T-cell (primary cell): ENCODE measurements at regions of chr19 and their contacts with region 1.

Region 1: GRCh38 chr19:13181747-13182388 is 31.7 kb downstream of the IER2 start:
- DNase-seq: peak in 27 of 35 experiments; percentile 15 to 58 (median 36)
- ATAC-seq: peak; percentile 40 to 75 (median 71)
- H3K4me3 ChIP-seq: peak overlapping the region in 1 of 2 donors; percentile 5
- H3K4me3 Mint-ChIP-seq: peak overlapping the region in 2 of 3 donors; percentile 57 to 66
- H3K27ac ChIP-seq: peak overlapping the region; percentile 53
- H3K27ac Mint-ChIP-seq: peak overlapping the region; percentile 77 to 91
- H3K4me1 ChIP-seq: peaks cover 11 to 45% of the 10 kb centered on the region in 2 experiments
- H3K4me1 Mint-ChIP-seq: peaks cover 30 to 33% (median 31%) of the 10 kb centered on the region in 3 donors
- H3K27me3 ChIP-seq: no peaks in the 10 kb centered on the region
- H3K27me3 Mint-ChIP-seq: no peaks in the 10 kb centered on the region

Region 2: GRCh38 chr19:13138916-13139198 is 43.0 kb before region 1 on chr19:
- CTCF ChIA-PET with region 1: no interaction called
- POLR2A ChIA-PET with region 1: no interaction called
- DNase-seq: no peak
- ATAC-seq: no peak
- H3K4me3 ChIP-seq: no peak overlapping the region
- H3K4me3 Mint-ChIP-seq: no peak overlapping the region
- H3K27ac ChIP-seq: no peak overlapping the region
- H3K27ac Mint-ChIP-seq: no peak overlapping the region
- H3K4me1 ChIP-seq: no peaks in the 10 kb centered on the region
- H3K4me1 Mint-ChIP-seq: peaks cover 0 to 5% (median 2%) of the 10 kb centered on the region in 3 donors
- H3K27me3 ChIP-seq: no peaks in the 10 kb centered on the region
- H3K27me3 Mint-ChIP-seq: no peaks in the 10 kb centered on the region

Region 3: GRCh38 chr19:13160557-13160956 is 21.3 kb before region 1 on chr19:
- CTCF ChIA-PET with region 1: no interaction called
- POLR2A ChIA-PET with region 1: no interaction called
- DNase-seq: no peak
- ATAC-seq: no peak
- H3K4me3 ChIP-seq: no peak overlapping the region
- H3K4me3 Mint-ChIP-seq: no peak overlapping the region
- H3K27ac ChIP-seq: peak overlapping the region; percentile 47
- H3K27ac Mint-ChIP-seq: peak overlapping the region; percentile 85 to 97
- H3K4me1 ChIP-seq: peaks cover 46 to 87% of the 10 kb centered on the region in 2 experiments
- H3K4me1 Mint-ChIP-seq: peaks cover 72 to 80% (median 74%) of the 10 kb centered on the region in 3 donors
- H3K27me3 ChIP-seq: no peaks in the 10 kb centered on the region
- H3K27me3 Mint-ChIP-seq: no peaks in the 10 kb centered on the region

Region 4: DNA sequence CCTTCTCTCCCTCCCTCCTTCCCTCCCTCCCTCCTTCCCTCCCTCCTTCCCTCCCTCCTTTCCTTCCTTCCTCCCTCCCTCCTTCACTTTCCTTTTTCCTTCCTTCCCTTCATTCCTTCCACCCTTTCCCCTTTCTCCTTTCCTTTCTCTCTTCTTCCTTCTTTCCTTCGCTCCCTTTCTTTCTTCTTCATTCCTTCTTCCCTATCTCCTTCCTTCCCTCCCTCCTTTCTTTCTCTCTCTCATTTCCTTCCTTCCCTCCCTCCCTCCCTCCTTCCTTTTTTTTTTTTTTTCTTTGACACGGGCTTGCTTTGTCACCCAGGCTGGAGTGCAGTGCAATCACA is 73.8 kb after region 1 on chr19:
- CTCF ChIA-PET with region 1: interaction called in 1 of 2 experiments, 12 read pairs
- POLR2A ChIA-PET with region 1: no interaction called
- DNase-seq: no peak
- ATAC-seq: no peak
- H3K4me3 ChIP-seq: no peak overlapping the region
- H3K4me3 Mint-ChIP-seq: no peak overlapping the region
- H3K27ac ChIP-seq: no peak overlapping the region
- H3K27ac Mint-ChIP-seq: no peak overlapping the region
- H3K4me1 ChIP-seq: no peaks in the 10 kb centered on the region
- H3K4me1 Mint-ChIP-seq: peaks cover 0 to under 1% (median 0%) of the 10 kb centered on the region in 3 donors
- H3K27me3 ChIP-seq: peaks cover 0 to 41% of the 10 kb centered on the region in 2 experiments
- H3K27me3 Mint-ChIP-seq: peaks cover 26% of the 10 kb centered on the region in 2 donors

Region 5: DNA sequence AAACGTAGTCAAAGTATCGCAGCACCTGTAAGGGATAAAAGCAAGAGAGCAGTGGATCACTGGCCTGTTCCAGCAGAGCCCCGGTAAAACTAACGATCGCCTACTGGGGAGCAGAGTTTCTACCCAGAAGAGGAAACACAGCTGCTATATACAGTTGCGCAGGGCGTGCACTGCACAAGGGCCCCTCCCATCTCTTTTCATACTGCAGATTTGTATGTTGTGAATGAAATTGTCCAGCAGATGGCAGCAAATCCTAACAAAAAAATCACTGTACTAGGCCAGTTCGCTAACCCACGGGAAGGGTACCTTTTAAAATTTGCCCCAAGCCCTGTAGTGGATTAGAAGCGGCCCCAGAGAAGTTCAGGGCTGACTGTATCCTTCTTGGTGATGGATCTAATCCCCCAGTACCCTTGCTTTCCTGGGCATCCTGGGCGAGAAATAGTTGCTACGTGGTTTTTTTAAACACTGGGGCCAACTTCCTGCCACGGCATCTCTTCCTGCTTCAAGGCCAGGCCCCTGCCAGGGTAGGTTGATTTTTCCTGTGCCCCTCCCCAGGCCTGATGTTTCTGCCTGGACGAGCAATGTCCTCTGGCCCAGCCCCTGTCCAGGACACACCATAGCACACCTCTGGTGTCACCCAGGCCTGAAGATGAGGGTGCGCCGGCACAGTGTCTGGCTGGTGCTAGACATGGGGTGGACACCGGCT is 95.4 kb after region 1 on chr19:
- CTCF ChIA-PET with region 1: no interaction called
- POLR2A ChIA-PET with region 1: no interaction called
- DNase-seq: peak in 34 of 35 experiments; percentile 6 to 90 (median 48)
- ATAC-seq: peak; percentile 86 to 89 (median 88)
- H3K4me3 ChIP-seq: peak overlapping the region in 1 of 2 donors; percentile 33
- H3K4me3 Mint-ChIP-seq: peak overlapping the region; percentile 13 to 57 (median 53)
- H3K27ac ChIP-seq: peak overlapping the region; percentile 73
- H3K27ac Mint-ChIP-seq: peak overlapping the region; percentile 84 to 88
- H3K4me1 ChIP-seq: peaks cover 0 to 15% of the 10 kb centered on the region in 2 experiments
- H3K4me1 Mint-ChIP-seq: peaks cover 19 to 31% (median 22%) of the 10 kb centered on the region in 3 donors
- H3K27me3 ChIP-seq: peaks cover 0 to 21% of the 10 kb centered on the region in 2 experiments
- H3K27me3 Mint-ChIP-seq: peaks cover 0 to 5% of the 10 kb centered on the region in 2 donors

Region 6: GRCh38 chr19:13430790-13431582 is 249.1 kb after region 1 on chr19:
- CTCF ChIA-PET with region 1: no interaction called
- POLR2A ChIA-PET with region 1: no interaction called
- DNase-seq: peak; percentile 6 to 60 (median 31)
- ATAC-seq: peak in 2 of 4 experiments; percentile 36 to 49
- H3K4me3 ChIP-seq: no peak overlapping the region
- H3K4me3 Mint-ChIP-seq: no peak overlapping the region
- H3K27ac ChIP-seq: no peak overlapping the region
- H3K27ac Mint-ChIP-seq: no peak overlapping the region
- H3K4me1 ChIP-seq: no peaks in the 10 kb centered on the region
- H3K4me1 Mint-ChIP-seq: no peaks in the 10 kb centered on the region
- H3K27me3 ChIP-seq: peaks cover 0 to 22% of the 10 kb centered on the region in 2 experiments
- H3K27me3 Mint-ChIP-seq: peaks cover 18 to 30% of the 10 kb centered on the region in 2 donors